HEK293 (cell line): ENCODE measurements at regions of chr10 and their contacts with region 1.

Region 1: GRCh38 chr10:119859420-119860258 is 13.0 kb downstream of the MCMBP start:
- H3K4me3 ChIP-seq: no peak overlapping the region
- H3K27ac ChIP-seq: no peak overlapping the region
- H3K4me1 ChIP-seq: peaks cover 14% of the 10 kb centered on the region
- CTCF ChIP-seq: no peak

Region 2: GRCh38 chr10:119608316-119609155 is 251.1 kb before region 1 on chr10:
- CTCF ChIA-PET with region 1: interaction called, 14 read pairs
- POLR2A ChIA-PET with region 1: no interaction called
- H3K4me3 ChIP-seq: no peak overlapping the region
- H3K27ac ChIP-seq: no peak overlapping the region
- H3K4me1 ChIP-seq: no peaks in the 10 kb centered on the region
- CTCF ChIP-seq: peak; percentile 86

Region 3: GRCh38 chr10:119686439-119687191 is 173.0 kb before region 1 on chr10:
- CTCF ChIA-PET with region 1: interaction called, 22 read pairs
- POLR2A ChIA-PET with region 1: no interaction called
- H3K4me3 ChIP-seq: peak overlapping the region; percentile 12
- H3K27ac ChIP-seq: peak overlapping the region; percentile 51; the same call in 1 of the 2 replicates
- H3K4me1 ChIP-seq: no peaks in the 10 kb centered on the region
- CTCF ChIP-seq: peak; percentile 94

Region 4: GRCh38 chr10:119737827-119738226 is 121.8 kb before region 1 on chr10:
- CTCF ChIA-PET with region 1: interaction called, 18 read pairs
- POLR2A ChIA-PET with region 1: no interaction called
- H3K4me3 ChIP-seq: no peak overlapping the region
- H3K27ac ChIP-seq: no peak overlapping the region
- H3K4me1 ChIP-seq: peaks cover 32% of the 10 kb centered on the region
- CTCF ChIP-seq: no peak

Region 5: GRCh38 chr10:119798736-119799135 is 60.9 kb before region 1 on chr10:
- CTCF ChIA-PET with region 1: no interaction called
- POLR2A ChIA-PET with region 1: no interaction called
- H3K4me3 ChIP-seq: no peak overlapping the region
- H3K27ac ChIP-seq: no peak overlapping the region
- H3K4me1 ChIP-seq: no peaks in the 10 kb centered on the region; the same call in 1 of the 2 replicates
- CTCF ChIP-seq: no peak

Region 6: DNA sequence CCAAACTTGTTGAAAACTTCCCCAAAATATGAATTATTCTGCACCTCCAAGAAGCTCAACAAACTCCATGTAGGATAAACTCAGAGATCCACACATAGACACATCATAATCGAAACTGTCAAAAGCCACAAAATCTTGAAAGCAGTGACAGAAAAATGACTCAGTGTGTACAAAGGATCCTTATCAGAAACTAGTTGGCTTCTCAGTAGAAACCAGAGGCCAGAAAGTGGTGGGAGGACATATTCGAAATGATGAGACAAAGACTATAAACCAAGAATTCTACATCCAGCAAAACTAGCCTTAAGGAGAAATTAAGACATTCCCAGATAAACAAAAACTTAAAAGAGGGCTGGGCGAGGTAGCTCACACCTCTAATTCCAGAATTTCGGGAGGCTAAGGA is 25.5 kb before region 1 on chr10:
- CTCF ChIA-PET with region 1: interaction called, 12 read pairs
- POLR2A ChIA-PET with region 1: no interaction called
- H3K4me3 ChIP-seq: no peak overlapping the region
- H3K27ac ChIP-seq: no peak overlapping the region
- H3K4me1 ChIP-seq: no peaks in the 10 kb centered on the region
- CTCF ChIP-seq: no peak

Region 7: DNA sequence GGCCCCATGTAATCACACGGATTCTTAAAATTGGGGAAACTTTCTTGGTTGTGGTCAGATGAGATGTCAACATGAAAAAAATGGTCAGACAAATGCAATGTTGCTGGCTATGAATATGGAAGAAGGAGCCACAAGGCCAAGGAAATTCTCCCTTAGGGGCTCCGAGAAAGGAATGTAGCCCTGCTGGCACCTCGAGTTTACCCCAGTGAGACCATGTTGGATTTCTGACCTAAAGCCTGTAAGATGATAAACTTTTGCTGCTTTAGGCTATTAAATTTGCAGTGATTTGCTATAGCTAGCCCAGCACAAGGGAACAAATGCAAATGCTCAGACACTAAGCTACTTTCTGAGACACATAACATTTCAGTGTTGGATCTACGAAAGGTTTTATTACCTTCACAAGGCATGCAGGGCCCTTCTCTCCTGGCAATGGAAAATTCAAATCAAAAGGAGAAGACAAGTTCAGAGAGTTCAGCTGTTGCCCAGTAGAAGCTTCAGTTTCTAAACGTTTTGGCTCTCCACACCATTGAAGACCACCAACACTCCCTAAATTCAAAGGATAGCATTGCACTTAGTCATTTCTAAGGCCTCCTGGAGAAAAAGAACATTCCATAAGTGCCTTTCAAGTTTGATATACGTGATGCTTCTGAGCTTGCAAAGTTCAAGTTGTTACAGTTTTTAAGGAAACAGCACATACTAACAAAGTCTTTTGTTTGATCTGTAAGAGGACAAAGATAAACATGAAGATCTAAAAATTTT is 10.4 kb before region 1 on chr10:
- CTCF ChIA-PET with region 1: interaction called, 11 read pairs
- POLR2A ChIA-PET with region 1: interaction called, 5 read pairs
- H3K4me3 ChIP-seq: no peak overlapping the region
- H3K27ac ChIP-seq: no peak overlapping the region
- H3K4me1 ChIP-seq: no peaks in the 10 kb centered on the region
- CTCF ChIP-seq: no peak

Region 8: DNA sequence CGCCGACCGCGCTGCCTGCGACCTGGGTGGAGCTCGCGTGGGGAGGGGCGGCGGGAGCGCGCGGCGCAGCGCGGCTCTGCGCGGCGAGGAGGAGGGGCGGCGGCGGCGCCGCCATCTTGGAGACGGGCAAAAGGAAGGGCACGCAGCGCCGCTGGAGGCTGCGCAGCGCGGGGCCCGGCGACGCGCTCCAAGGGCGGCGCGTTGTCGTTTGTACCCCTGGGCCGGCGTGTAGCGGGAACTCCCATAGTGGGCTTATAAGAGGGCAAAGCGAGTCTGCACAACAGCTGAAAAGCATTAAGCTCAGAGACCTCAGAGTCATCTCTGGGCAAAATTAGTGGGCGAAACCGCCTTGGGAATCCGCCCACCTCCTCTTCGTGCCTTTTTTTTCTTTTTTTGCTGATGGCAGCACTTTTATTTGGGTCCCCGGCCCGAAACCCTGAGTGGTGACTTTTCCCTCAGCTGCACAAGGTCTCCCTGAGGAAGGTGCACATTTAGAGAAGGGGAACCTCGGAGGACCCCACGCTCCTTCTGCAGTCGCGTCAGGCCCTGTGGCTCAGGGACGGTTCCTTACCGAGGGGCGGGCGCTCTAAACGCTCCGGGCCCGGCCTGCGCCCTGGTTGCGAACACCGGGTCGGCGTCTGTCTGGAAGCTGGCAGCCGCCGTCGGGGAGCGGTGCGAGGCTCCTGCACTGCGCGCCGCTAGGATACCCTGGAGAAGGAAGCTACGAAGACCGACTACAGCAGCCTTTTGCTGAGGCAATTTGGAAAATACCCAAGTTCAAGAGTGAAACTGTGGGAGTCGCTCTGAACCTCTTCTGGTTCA is 13.4 kb after region 1 on chr10:
- CTCF ChIA-PET with region 1: interaction called, 31 read pairs
- POLR2A ChIA-PET with region 1: interaction called, 17 read pairs
- H3K4me3 ChIP-seq: peak overlapping the region; percentile 76
- H3K27ac ChIP-seq: peak overlapping the region; percentile 99
- H3K4me1 ChIP-seq: no peaks in the 10 kb centered on the region
- CTCF ChIP-seq: 0 out of 2 replicates have a peak, but pooled peaks have one; percentile 20

Region 9: GRCh38 chr10:120209124-120209762 is 349.6 kb after region 1 on chr10:
- CTCF ChIA-PET with region 1: no interaction called
- POLR2A ChIA-PET with region 1: no interaction called
- H3K4me3 ChIP-seq: no peak overlapping the region
- H3K27ac ChIP-seq: no peak overlapping the region
- H3K4me1 ChIP-seq: no peaks in the 10 kb centered on the region
- CTCF ChIP-seq: no peak